GM12878 (cell line): ENCODE measurements at regions of chr20 and their contacts with region 1.

Region 1: DNA sequence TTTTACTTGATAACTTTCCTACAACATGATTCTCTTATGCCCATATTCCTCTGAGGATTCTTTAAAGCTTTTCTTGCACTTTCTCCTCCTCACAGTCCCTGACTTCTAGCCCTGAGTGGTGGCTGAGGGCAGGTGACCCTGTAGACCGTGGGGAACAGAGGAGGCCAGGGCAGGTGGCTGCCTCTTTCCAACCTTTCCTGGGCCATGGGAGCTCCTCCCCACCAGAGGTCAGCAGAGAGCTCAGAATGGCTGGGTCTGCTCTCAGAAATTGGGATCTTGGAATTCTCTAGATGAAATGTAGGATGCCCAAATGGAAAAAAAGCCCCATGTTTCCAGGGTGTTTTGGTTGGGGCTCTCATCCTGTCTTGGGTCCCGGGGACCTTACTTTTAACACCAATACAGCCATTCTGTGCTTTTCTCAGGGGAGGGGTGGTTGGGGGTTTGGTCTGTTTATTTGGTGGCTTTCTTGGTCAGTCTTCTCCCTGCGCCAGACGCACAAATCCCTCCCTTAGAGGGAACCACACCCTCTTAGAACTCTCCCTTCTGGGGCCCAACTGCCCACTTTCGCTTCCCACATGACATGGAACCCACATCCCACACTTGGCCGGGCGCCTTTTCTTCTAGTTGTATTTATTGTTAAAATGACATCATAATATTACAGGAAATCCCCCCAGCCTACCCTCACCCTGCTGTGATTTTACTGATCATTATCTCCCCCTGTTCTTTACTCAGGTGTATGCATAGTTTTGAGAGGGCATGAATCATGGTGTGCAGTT is 17.9 kb downstream of the GNAS start:
- DNase-seq: no peak
- ATAC-seq: peak; percentile 91
- H3K4me3 ChIP-seq: no peak overlapping the region
- H3K27ac ChIP-seq: no peak overlapping the region
- H3K4me1 ChIP-seq: peaks cover 10% of the 10 kb centered on the region
- H3K27me3 ChIP-seq: no peaks in the 10 kb centered on the region
- CTCF ChIP-seq: peak; percentile 81 to 87 (median 87)
- EP300 ChIP-seq: peak; percentile 33 to 48; a peak in 1 of 4 replicates
- POLR2A ChIP-seq: no peak
- RAD21 ChIP-seq: peak; percentile 82

Region 2: GRCh38 chr20:58880994-58881752 is 10.7 kb after region 1 on chr20:
- CTCF ChIA-PET with region 1: interaction called, 19 read pairs
- POLR2A ChIA-PET with region 1: no interaction called
- RAD21 ChIA-PET with region 1: interaction called, 4 read pairs
- SMC1A ChIA-PET with region 1: interaction called, 8 read pairs
- in situ Hi-C with region 1: no loop called
- intact Hi-C with region 1: loop called (anchors 2 kb)
- DNase-seq: no peak
- ATAC-seq: peak; percentile 88
- H3K4me3 ChIP-seq: no peak overlapping the region
- H3K27ac ChIP-seq: no peak overlapping the region
- H3K4me1 ChIP-seq: peaks cover 4% of the 10 kb centered on the region
- H3K27me3 ChIP-seq: no peaks in the 10 kb centered on the region
- CTCF ChIP-seq: peak; percentile 37 to 39 (median 37); a peak in 4 of 6 replicates
- EP300 ChIP-seq: no peak
- POLR2A ChIP-seq: no peak
- RAD21 ChIP-seq: peak; percentile 48; the same call in 1 of the 2 replicates

Region 3: GRCh38 chr20:58907399-58908137 is 37.1 kb after region 1 on chr20:
- CTCF ChIA-PET with region 1: interaction called, 10 read pairs
- POLR2A ChIA-PET with region 1: no interaction called
- RAD21 ChIA-PET with region 1: interaction called, 4 read pairs
- SMC1A ChIA-PET with region 1: interaction called, 4 read pairs
- in situ Hi-C with region 1: no loop called
- intact Hi-C with region 1: no loop called
- DNase-seq: peak; percentile 98
- ATAC-seq: peak; percentile 88
- H3K4me3 ChIP-seq: peak overlapping the region; percentile 67
- H3K27ac ChIP-seq: peak overlapping the region; percentile 96
- H3K4me1 ChIP-seq: peaks cover 54% of the 10 kb centered on the region
- H3K27me3 ChIP-seq: no peaks in the 10 kb centered on the region
- CTCF ChIP-seq: no peak
- EP300 ChIP-seq: peak; percentile 57 to 85
- POLR2A ChIP-seq: peak; percentile 71
- RAD21 ChIP-seq: no peak; the same call in 1 of the 2 replicates

Region 4: GRCh38 chr20:58950603-58951002 is 80.2 kb after region 1 on chr20:
- CTCF ChIA-PET with region 1: no interaction called
- POLR2A ChIA-PET with region 1: no interaction called
- RAD21 ChIA-PET with region 1: no interaction called
- SMC1A ChIA-PET with region 1: no interaction called
- in situ Hi-C with region 1: no loop called
- intact Hi-C with region 1: no loop called
- DNase-seq: no peak
- ATAC-seq: no peak
- H3K4me3 ChIP-seq: no peak overlapping the region
- H3K27ac ChIP-seq: no peak overlapping the region
- H3K4me1 ChIP-seq: peaks cover 4% of the 10 kb centered on the region; the same call in 1 of the 2 replicates
- H3K27me3 ChIP-seq: no peaks in the 10 kb centered on the region
- CTCF ChIP-seq: no peak
- EP300 ChIP-seq: no peak
- POLR2A ChIP-seq: no peak
- RAD21 ChIP-seq: no peak

Region 5: DNA sequence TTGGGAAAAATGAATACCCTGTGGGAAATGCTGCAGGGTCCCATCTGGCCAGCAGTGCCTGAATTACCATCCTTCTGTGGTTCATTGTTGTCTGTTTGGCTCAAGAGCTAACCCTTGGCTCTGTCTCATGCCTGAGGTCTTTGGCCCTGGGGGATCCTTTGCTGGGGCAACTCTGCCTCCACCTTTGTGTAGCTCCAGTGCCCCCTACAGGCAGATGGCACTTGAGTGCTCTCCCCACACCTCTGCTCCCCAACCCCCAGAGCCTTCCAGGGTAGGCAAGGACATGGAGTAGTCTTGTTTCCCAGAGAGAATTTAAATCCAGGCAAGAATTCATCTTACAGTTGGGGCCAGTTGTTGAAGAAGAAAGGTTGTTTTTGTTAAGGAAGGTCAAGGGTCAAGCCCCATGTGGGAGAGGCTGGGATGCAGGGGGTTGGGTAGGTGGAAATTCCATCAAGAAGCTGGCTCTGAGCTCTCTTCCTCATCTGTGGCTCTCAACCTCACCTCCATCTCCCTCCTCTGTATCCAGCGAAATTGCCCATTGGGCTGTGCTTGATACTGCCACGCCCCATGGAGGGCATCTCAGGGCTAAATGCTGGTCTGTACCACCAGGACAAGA is 337.4 kb after region 1 on chr20:
- CTCF ChIA-PET with region 1: interaction called, 36 read pairs
- POLR2A ChIA-PET with region 1: no interaction called
- RAD21 ChIA-PET with region 1: interaction called, 18 read pairs
- SMC1A ChIA-PET with region 1: interaction called, 19 read pairs
- in situ Hi-C with region 1: loop called (anchors 5 kb)
- intact Hi-C with region 1: loop called (anchors 1 kb)
- DNase-seq: peak; percentile 2
- ATAC-seq: peak; percentile 97
- H3K4me3 ChIP-seq: no peak overlapping the region
- H3K27ac ChIP-seq: no peak overlapping the region
- H3K4me1 ChIP-seq: no peaks in the 10 kb centered on the region
- H3K27me3 ChIP-seq: no peaks in the 10 kb centered on the region
- CTCF ChIP-seq: peak; percentile 76 to 91 (median 78)
- EP300 ChIP-seq: no peak
- POLR2A ChIP-seq: no peak
- RAD21 ChIP-seq: peak; percentile 87

Region 6: DNA sequence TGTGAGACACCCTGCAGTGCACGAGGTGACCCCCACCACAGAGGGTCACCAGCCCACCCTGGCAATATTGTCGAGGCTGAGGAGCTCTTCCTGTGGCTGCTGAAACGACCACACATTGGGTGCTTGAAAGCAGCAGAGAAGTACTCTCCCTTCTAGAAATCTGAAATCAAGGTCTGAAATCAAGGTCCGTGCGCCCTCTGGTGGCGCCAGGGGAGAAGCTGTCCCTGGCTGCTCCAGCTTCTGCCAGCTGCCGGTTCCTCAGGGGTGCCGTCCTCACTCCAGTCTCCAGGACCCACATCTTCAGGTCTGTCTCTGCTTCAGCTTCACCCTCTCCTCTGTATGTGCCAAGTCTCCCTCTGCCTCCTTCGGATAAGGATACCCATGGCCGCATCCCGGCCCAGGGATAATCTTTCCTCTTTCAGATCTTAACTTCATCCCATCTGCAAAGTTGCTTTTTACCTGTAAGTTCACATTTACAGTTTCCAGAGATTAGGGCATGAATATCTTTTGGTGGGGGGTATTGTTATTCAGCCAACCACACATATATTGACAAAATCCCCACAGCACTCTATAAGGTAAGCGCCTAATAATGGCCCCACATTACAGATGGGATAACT is 625.6 kb after region 1 on chr20:
- CTCF ChIA-PET with region 1: interaction called, 4 read pairs
- POLR2A ChIA-PET with region 1: no interaction called
- RAD21 ChIA-PET with region 1: interaction called, 5 read pairs
- SMC1A ChIA-PET with region 1: interaction called, 4 read pairs
- in situ Hi-C with region 1: loop called (anchors 10 kb)
- intact Hi-C with region 1: loop called (anchors 2 kb)
- DNase-seq: no peak
- ATAC-seq: peak; percentile 86
- H3K4me3 ChIP-seq: no peak overlapping the region
- H3K27ac ChIP-seq: no peak overlapping the region
- H3K4me1 ChIP-seq: no peaks in the 10 kb centered on the region
- H3K27me3 ChIP-seq: peaks cover 0 to 2% of the 10 kb centered on the region in 2 experiments; a peak in 1 of 4 replicates
- CTCF ChIP-seq: peak; percentile 82 to 93 (median 90)
- EP300 ChIP-seq: no peak
- POLR2A ChIP-seq: no peak
- RAD21 ChIP-seq: peak; percentile 54